CD8-positive, alpha-beta T cell (primary cell): ENCODE measurements at regions of chr3 and their contacts with region 1.

Region 1: DNA sequence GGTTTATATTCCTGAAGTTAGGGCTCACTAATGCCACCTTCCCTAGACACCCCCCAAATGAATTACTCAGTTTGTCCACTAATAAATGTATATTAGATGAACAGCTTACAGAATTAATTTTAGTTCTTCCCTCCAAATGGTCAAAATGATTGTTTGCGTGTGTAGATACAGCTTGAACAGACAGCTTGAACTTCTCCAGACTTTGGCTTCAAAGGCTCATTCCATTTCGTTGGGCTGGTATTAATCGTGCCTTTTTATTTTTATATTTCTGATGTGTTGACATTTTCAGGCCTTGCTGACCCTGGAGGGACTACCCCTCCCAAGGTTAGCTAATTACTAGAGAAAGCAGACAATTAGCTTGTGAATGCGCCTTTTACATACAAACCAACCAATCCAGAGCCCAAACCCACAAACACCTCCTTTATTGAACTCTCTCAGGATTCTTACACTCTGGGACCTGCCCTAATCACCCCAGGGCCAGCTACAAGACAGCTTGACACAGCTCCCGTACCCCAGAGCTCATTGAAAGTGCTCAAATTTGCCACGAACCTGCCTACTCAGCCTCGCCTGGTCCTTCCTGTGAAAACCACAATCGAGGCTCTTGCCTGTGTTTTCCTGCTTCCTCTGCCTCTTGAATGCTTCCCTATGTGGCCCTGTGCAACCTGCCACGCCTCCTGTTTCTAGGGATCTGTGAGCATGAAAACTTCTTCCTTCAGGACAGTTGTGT is 40.3 kb downstream of the RPL22L1 start:
- DNase-seq: no peak
- ATAC-seq: no peak
- H3K4me3 ChIP-seq: no peak overlapping the region
- H3K4me3 Mint-ChIP-seq: no peak overlapping the region
- H3K27ac ChIP-seq: no peak overlapping the region
- H3K27ac Mint-ChIP-seq: no peak overlapping the region
- H3K4me1 ChIP-seq: no peaks in the 10 kb centered on the region
- H3K4me1 Mint-ChIP-seq: peaks cover 4% of the 10 kb centered on the region
- H3K27me3 ChIP-seq: no peaks in the 10 kb centered on the region
- H3K27me3 Mint-ChIP-seq: peaks cover 31% of the 10 kb centered on the region
- CTCF ChIP-seq: no peak

Region 2: GRCh38 chr3:170811928-170812591 is 17.6 kb before region 1 on chr3:
- CTCF ChIA-PET with region 1: interaction called, 18 read pairs
- POLR2A ChIA-PET with region 1: no interaction called
- intact Hi-C with region 1: no loop called
- DNase-seq: peak; percentile 37 to 78 (median 59)
- ATAC-seq: peak; percentile 98
- H3K4me3 ChIP-seq: no peak overlapping the region
- H3K4me3 Mint-ChIP-seq: no peak overlapping the region
- H3K27ac ChIP-seq: no peak overlapping the region
- H3K27ac Mint-ChIP-seq: no peak overlapping the region
- H3K4me1 ChIP-seq: no peaks in the 10 kb centered on the region
- H3K4me1 Mint-ChIP-seq: no peaks in the 10 kb centered on the region
- H3K27me3 ChIP-seq: peaks cover 0 to 2% of the 10 kb centered on the region in 2 experiments
- H3K27me3 Mint-ChIP-seq: peaks cover 2% of the 10 kb centered on the region
- CTCF ChIP-seq: peak; percentile 87